Right cardiac atrium (tissue), 5 donors: ENCODE measurements at regions of chr18 and their contacts with region 1.

Region 1: DNA sequence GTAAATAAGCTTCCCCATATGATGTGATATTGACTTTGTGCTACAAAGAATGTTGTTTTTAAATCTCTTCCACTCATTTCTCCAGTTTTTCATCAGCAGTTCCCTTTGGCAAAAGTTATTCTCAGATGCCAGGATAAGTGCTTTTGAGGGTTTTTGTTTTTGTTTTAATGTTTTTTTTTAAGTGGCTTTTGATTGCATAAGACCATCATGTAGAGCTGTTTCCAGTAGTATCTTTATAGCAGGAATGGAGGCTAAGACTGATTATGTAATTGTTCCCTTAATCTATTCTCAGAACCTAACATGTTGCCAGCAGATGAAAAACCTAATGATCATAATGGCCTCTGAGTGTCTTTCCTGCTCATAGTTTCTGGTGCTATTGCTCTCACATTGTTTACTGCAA is 77.9 kb downstream of the CABLES1 start:
- DNase-seq: no peak
- ATAC-seq: no peak
- H3K4me3 ChIP-seq: no peak overlapping the region
- H3K27ac ChIP-seq: no peak overlapping the region
- H3K4me1 ChIP-seq: peaks cover 2% of the 10 kb centered on the region
- H3K27me3 ChIP-seq: no peaks in the 10 kb centered on the region

Region 2: GRCh38 chr18:23143016-23143814 is 70.0 kb before region 1 on chr18:
- intact Hi-C with region 1: loop called in 1 of 4 experiments (anchors 10 kb)
- DNase-seq: peak; percentile 67 to 80 (median 78)
- ATAC-seq: peak; percentile 79 to 83
- H3K4me3 ChIP-seq: no peak overlapping the region
- H3K27ac ChIP-seq: peak overlapping the region; percentile 75
- H3K4me1 ChIP-seq: peaks cover 13% of the 10 kb centered on the region
- H3K27me3 ChIP-seq: no peaks in the 10 kb centered on the region

Region 3: DNA sequence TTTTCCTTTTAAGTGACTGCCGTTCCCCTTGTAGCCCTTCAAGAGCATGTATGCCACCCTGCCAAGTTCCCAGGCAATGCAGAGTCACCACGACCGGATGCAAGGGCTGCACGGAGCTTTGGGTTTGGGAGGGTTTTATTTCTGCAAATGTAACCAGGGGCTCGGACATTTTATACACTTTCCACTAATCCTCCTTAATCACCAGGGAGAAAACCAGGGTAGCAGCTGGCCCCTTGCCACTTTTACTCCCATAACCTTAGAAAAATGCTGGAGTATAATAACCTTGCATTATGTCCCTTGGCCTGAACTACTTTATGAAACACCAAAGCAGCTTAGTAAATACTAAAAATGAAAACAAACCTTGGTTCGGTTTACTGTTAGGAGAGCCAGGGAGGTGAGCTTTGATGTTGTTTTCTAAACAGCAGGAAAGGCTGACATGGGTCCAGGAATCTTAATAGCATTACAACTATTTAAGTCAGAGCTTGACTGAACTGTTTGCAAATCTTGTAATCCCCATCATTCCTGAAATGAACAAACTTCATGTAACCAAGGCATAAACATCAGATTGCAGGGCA is 87.1 kb after region 1 on chr18:
- intact Hi-C with region 1: no loop called
- DNase-seq: no peak
- ATAC-seq: no peak
- H3K4me3 ChIP-seq: no peak overlapping the region
- H3K27ac ChIP-seq: no peak overlapping the region
- H3K4me1 ChIP-seq: no peaks in the 10 kb centered on the region
- H3K27me3 ChIP-seq: no peaks in the 10 kb centered on the region

Region 4: DNA sequence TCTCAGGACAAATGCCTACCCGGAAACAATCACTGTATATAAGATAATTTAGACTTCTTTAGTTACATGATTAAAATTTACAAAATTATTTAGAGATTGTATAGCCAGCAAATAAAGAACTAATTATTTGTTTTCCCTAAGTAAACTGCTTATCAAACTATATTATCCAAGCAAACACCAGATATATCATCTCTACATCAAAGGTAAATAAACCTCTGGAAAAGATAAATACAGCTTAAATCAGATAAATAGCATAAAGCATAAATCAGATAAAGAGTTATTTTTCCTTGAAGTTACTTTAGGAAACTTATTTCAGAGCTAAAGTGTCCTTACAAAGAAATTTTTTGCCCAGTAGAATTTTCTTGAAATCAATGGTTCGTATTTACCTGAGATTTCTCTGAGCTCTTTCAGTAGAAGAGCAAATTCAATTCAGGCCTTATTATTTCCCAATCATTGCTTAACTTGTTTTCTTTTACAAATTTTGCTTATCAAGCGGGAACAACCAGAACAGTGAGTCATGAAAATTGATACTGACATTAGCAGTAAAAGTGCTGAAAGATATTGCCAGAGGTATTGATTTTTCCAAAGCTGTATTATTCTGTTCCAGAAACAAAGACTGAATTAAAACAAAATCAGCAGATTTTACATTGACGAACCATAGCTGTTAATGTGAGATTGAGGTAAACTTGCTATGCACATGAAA is 229.6 kb after region 1 on chr18:
- intact Hi-C with region 1: no loop called
- DNase-seq: no peak
- ATAC-seq: no peak
- H3K4me3 ChIP-seq: no peak overlapping the region
- H3K27ac ChIP-seq: no peak overlapping the region
- H3K4me1 ChIP-seq: no peaks in the 10 kb centered on the region
- H3K27me3 ChIP-seq: no peaks in the 10 kb centered on the region